ENCODE measurements at regions of chr19 and their contacts with region 1.

Region 1: DNA sequence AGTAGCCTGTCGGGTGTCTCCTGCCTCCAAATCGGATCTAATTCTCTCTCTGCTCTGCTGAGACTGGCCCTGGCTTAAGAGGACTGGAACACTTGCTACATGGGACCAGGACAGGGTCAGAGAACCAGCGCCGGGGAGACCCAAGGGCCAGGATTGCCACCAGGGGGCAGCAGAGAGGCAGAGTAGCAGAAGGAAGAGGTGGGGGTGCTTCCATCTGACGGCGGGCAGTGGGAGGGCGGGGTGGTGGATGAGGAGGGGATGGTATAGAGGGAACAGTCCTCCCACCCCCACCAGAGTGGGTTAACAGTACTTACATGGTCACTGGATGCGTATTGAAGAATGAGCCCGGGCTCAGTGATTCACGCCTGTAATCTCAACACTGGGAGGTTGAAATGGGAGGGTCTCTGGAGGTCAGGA is 11.9 kb downstream of the SELENOW start:
- DNase-seq: peak; percentile 86
- ATAC-seq: peak; percentile 80
- H3K4me3 Mint-ChIP-seq: no peak overlapping the region
- H3K27ac Mint-ChIP-seq: no peak overlapping the region
- H3K4me1 Mint-ChIP-seq: peaks cover 7% of the 10 kb centered on the region
- H3K27me3 Mint-ChIP-seq: no peaks in the 10 kb centered on the region

Region 2: GRCh38 chr19:47693493-47693892 is 96.9 kb before region 1 on chr19:
- CTCF ChIA-PET with region 1: no interaction called
- POLR2A ChIA-PET with region 1: no interaction called
- DNase-seq: no peak
- ATAC-seq: no peak
- H3K4me3 Mint-ChIP-seq: no peak overlapping the region
- H3K27ac Mint-ChIP-seq: no peak overlapping the region
- H3K4me1 Mint-ChIP-seq: peaks cover 2% of the 10 kb centered on the region
- H3K27me3 Mint-ChIP-seq: no peaks in the 10 kb centered on the region

Region 3: GRCh38 chr19:47735131-47735530 is 55.3 kb before region 1 on chr19:
- CTCF ChIA-PET with region 1: no interaction called
- POLR2A ChIA-PET with region 1: no interaction called
- DNase-seq: no peak
- ATAC-seq: no peak
- H3K4me3 Mint-ChIP-seq: no peak overlapping the region
- H3K27ac Mint-ChIP-seq: no peak overlapping the region
- H3K4me1 Mint-ChIP-seq: peaks cover 2% of the 10 kb centered on the region
- H3K27me3 Mint-ChIP-seq: peaks cover 6% of the 10 kb centered on the region

Region 4: GRCh38 chr19:47765523-47766358 is 24.7 kb before region 1 on chr19:
- CTCF ChIA-PET with region 1: interaction called, 11 read pairs
- POLR2A ChIA-PET with region 1: interaction called, 3 read pairs
- DNase-seq: peak; percentile 51
- ATAC-seq: peak; percentile 54
- H3K4me3 Mint-ChIP-seq: no peak overlapping the region
- H3K27ac Mint-ChIP-seq: no peak overlapping the region
- H3K4me1 Mint-ChIP-seq: peaks cover 3% of the 10 kb centered on the region
- H3K27me3 Mint-ChIP-seq: peaks cover 4% of the 10 kb centered on the region

Measured in activated CD8-positive, alpha-beta T cell treated with anti-CD3 and anti-CD28 coated beads, Interleukin-2, amount 10 ng/mL, durations not matched to agents 7 days and 5 days (primary cell).